Activated CD4-positive, alpha-beta T cell treated with anti-CD3 and anti-CD28 coated beads for 36 hours (primary cell): ENCODE measurements at regions of chr14 and their contacts with region 1.

Region 1: GRCh38 chr14:92352158-92352985 is 29.4 kb downstream of the SLC24A4 start:
- DNase-seq: peak; percentile 73
- ATAC-seq: peak; percentile 49
- H3K4me3 Mint-ChIP-seq: no peak overlapping the region
- H3K27ac Mint-ChIP-seq: no peak overlapping the region
- H3K4me1 Mint-ChIP-seq: no peaks in the 10 kb centered on the region
- H3K27me3 Mint-ChIP-seq: peaks cover 18% of the 10 kb centered on the region

Region 2: GRCh38 chr14:91953170-91953985 is 399.0 kb before region 1 on chr14:
- CTCF ChIA-PET with region 1: no interaction called
- POLR2A ChIA-PET with region 1: no interaction called
- intact Hi-C with region 1: loop called in 1 of 2 experiments (anchors 10 kb)
- DNase-seq: no peak
- ATAC-seq: no peak
- H3K4me3 Mint-ChIP-seq: no peak overlapping the region
- H3K27ac Mint-ChIP-seq: no peak overlapping the region
- H3K4me1 Mint-ChIP-seq: no peaks in the 10 kb centered on the region
- H3K27me3 Mint-ChIP-seq: peaks cover 12% of the 10 kb centered on the region

Region 3: GRCh38 chr14:92135267-92135666 is 217.1 kb before region 1 on chr14:
- CTCF ChIA-PET with region 1: interaction called, 7 read pairs
- POLR2A ChIA-PET with region 1: no interaction called
- intact Hi-C with region 1: loop called in 1 of 2 experiments (anchors 1 kb)
- DNase-seq: no peak
- ATAC-seq: no peak
- H3K4me3 Mint-ChIP-seq: no peak overlapping the region
- H3K27ac Mint-ChIP-seq: no peak overlapping the region
- H3K4me1 Mint-ChIP-seq: no peaks in the 10 kb centered on the region
- H3K27me3 Mint-ChIP-seq: no peaks in the 10 kb centered on the region

Region 4: GRCh38 chr14:92362781-92363235 is 10.4 kb after region 1 on chr14:
- CTCF ChIA-PET with region 1: no interaction called
- POLR2A ChIA-PET with region 1: no interaction called
- intact Hi-C with region 1: no loop called
- DNase-seq: no peak
- ATAC-seq: no peak
- H3K4me3 Mint-ChIP-seq: no peak overlapping the region
- H3K27ac Mint-ChIP-seq: no peak overlapping the region
- H3K4me1 Mint-ChIP-seq: no peaks in the 10 kb centered on the region
- H3K27me3 Mint-ChIP-seq: peaks cover 9% of the 10 kb centered on the region

Region 5: DNA sequence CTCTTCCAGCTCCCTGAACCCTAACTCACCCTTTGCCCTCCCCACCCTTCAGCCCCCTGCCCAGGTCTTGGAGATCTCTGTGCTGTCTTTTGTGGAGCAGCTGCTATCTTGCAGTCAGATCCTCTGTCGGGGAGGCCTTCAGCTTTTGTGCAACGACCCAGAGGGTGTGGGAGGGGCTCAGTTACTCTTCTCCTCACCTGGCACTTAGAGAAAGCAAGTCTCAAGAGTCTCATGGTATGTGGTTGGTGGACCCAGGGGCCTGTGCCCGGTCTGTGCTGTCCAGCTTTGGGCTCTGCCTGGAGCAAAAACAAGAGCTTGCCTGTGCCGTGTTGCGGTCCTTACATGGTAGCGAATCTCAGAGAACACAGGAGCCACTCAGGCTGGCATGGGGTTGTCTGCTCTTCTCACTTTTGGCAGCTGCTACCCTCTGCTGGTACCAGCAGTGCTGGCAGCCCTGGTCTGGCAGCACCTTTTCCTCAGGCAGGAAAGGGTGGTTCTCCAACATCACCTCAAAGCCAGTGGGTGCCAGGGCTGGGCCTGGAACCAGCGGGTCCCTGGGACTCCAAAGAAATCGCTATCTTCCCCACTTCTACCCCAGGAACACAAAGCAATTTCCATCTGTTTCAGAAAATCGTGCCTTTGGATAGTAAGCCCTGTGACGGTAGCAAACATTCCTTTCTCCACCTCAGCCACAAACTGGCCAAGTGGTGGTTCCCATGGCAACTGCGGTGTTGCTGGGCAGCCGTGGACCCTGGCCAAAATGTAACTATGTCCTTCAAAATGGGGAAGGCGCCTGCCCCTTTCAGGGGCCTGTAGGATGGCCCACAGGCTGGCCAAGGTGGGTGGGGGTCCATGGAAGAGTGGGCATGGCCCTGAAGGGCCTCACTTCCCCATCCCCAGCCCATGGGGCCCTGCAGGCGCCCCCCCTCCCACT is 251.2 kb after region 1 on chr14:
- CTCF ChIA-PET with region 1: no interaction called
- POLR2A ChIA-PET with region 1: no interaction called
- intact Hi-C with region 1: loop called in 1 of 2 experiments (anchors 10 kb)
- DNase-seq: peak; percentile 68
- ATAC-seq: peak; percentile 92
- H3K4me3 Mint-ChIP-seq: no peak overlapping the region
- H3K27ac Mint-ChIP-seq: no peak overlapping the region
- H3K4me1 Mint-ChIP-seq: peaks cover 21% of the 10 kb centered on the region
- H3K27me3 Mint-ChIP-seq: no peaks in the 10 kb centered on the region